ENCODE measurements at regions of chr11 and their contacts with region 1.

Region 1: GRCh38 chr11:116454020-116454645 is 318.7 kb downstream of the BUD13 start:
- DNase-seq: no peak
- H3K4me3 Mint-ChIP-seq: no peak overlapping the region
- H3K27ac Mint-ChIP-seq: no peak overlapping the region
- H3K4me1 Mint-ChIP-seq: no peaks in the 10 kb centered on the region
- H3K27me3 Mint-ChIP-seq: no peaks in the 10 kb centered on the region

Region 2: GRCh38 chr11:115408378-115408921 is 1045.7 kb before region 1 on chr11:
- intact Hi-C with region 1: no loop called
- DNase-seq: no peak
- H3K4me3 Mint-ChIP-seq: no peak overlapping the region
- H3K27ac Mint-ChIP-seq: no peak overlapping the region
- H3K4me1 Mint-ChIP-seq: no peaks in the 10 kb centered on the region
- H3K27me3 Mint-ChIP-seq: no peaks in the 10 kb centered on the region

Region 3: GRCh38 chr11:116499396-116500003 is 45.4 kb after region 1 on chr11:
- intact Hi-C with region 1: loop called (anchors 1 kb)
- DNase-seq: peak; percentile 13
- H3K4me3 Mint-ChIP-seq: no peak overlapping the region
- H3K27ac Mint-ChIP-seq: no peak overlapping the region
- H3K4me1 Mint-ChIP-seq: no peaks in the 10 kb centered on the region
- H3K27me3 Mint-ChIP-seq: peaks cover 29% of the 10 kb centered on the region

Measured in activated T-helper 1 cell treated with anti-CD3 and anti-CD28 coated beads, Interleukin-12 subunit alpha, Interleukin-12 subunit beta, Interleukin-2, Interleukin-4 antibody, amounts not matched to agents 30 ng/mL and 10 ng/mL and 1 ng/mL, durations not matched to agents 14 hours and 24 hours and 36 hours (primary cell).